B cell (primary cell): ENCODE measurements at regions of chr10 and their contacts with region 1.

Region 1: GRCh38 chr10:49407552-49408137 is 11.8 kb upstream of the DRGX start:
- DNase-seq: peak; percentile 62
- ATAC-seq: peak; percentile 33
- H3K4me3 ChIP-seq: no peak overlapping the region
- H3K4me3 Mint-ChIP-seq: no peak overlapping the region
- H3K27ac ChIP-seq: no peak overlapping the region
- H3K27ac Mint-ChIP-seq: no peak overlapping the region
- H3K4me1 ChIP-seq: no peaks in the 10 kb centered on the region
- H3K4me1 Mint-ChIP-seq: no peaks in the 10 kb centered on the region
- H3K27me3 ChIP-seq: peaks cover 0 to 10% (median 3%) of the 10 kb centered on the region in 4 experiments
- H3K27me3 Mint-ChIP-seq: peaks cover 52% of the 10 kb centered on the region
- CTCF ChIP-seq: peak; percentile 77

Region 2: GRCh38 chr10:49389361-49389933 is 18.2 kb before region 1 on chr10:
- CTCF ChIA-PET with region 1: interaction called, 11 read pairs
- POLR2A ChIA-PET with region 1: no interaction called
- intact Hi-C with region 1: no loop called
- DNase-seq: no peak
- ATAC-seq: no peak
- H3K4me3 ChIP-seq: no peak overlapping the region
- H3K4me3 Mint-ChIP-seq: no peak overlapping the region
- H3K27ac ChIP-seq: no peak overlapping the region
- H3K27ac Mint-ChIP-seq: no peak overlapping the region
- H3K4me1 ChIP-seq: no peaks in the 10 kb centered on the region
- H3K4me1 Mint-ChIP-seq: no peaks in the 10 kb centered on the region
- H3K27me3 ChIP-seq: peaks cover 0 to 32% (median 18%) of the 10 kb centered on the region in 4 experiments
- H3K27me3 Mint-ChIP-seq: peaks cover 51% of the 10 kb centered on the region
- CTCF ChIP-seq: no peak

Region 3: GRCh38 chr10:49471532-49471931 is 63.9 kb after region 1 on chr10:
- CTCF ChIA-PET with region 1: interaction called, 4 read pairs
- POLR2A ChIA-PET with region 1: no interaction called
- intact Hi-C with region 1: loop called (anchors 2 kb)
- DNase-seq: no peak
- ATAC-seq: no peak
- H3K4me3 ChIP-seq: no peak overlapping the region
- H3K4me3 Mint-ChIP-seq: no peak overlapping the region
- H3K27ac ChIP-seq: no peak overlapping the region
- H3K27ac Mint-ChIP-seq: no peak overlapping the region
- H3K4me1 ChIP-seq: no peaks in the 10 kb centered on the region
- H3K4me1 Mint-ChIP-seq: no peaks in the 10 kb centered on the region
- H3K27me3 ChIP-seq: no peaks in the 10 kb centered on the region
- H3K27me3 Mint-ChIP-seq: no peaks in the 10 kb centered on the region
- CTCF ChIP-seq: no peak

Region 4: DNA sequence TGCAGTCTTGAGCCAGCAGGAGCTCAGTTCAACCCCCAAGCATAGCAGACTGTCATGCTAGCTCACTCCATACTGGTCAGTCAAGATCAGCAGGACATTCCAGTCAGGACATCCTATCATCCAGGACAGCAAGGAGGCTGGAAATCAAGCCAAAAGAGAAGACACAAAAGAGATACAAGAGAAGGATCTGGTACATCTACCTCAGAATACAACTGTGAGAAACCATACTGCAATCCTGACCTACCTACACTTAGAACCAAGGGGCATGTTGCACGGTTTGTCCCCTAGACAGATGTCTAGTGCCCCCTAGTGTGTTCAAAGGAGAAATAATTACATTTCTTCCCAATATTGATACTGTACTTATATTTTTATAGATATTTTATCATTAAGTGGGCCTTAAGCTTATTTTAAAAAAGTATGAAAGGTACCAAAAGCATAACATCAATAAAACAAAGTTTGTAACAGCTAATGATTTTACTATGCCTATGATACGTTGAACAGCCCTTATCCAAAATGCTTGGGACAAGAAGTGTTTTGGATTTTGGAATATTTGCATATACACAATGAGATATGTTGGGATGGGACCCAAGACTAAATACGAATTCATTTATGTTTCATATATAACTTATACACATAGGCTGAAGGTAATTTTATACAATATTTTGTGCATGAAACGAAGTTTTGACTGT is 104.6 kb after region 1 on chr10:
- CTCF ChIA-PET with region 1: interaction called, 31 read pairs
- POLR2A ChIA-PET with region 1: no interaction called
- intact Hi-C with region 1: no loop called
- DNase-seq: peak; percentile 40
- ATAC-seq: no peak
- H3K4me3 ChIP-seq: no peak overlapping the region
- H3K4me3 Mint-ChIP-seq: no peak overlapping the region
- H3K27ac ChIP-seq: no peak overlapping the region
- H3K27ac Mint-ChIP-seq: no peak overlapping the region
- H3K4me1 ChIP-seq: peaks cover 11 to 13% of the 10 kb centered on the region in 2 donors
- H3K4me1 Mint-ChIP-seq: peaks cover 15% of the 10 kb centered on the region
- H3K27me3 ChIP-seq: no peaks in the 10 kb centered on the region
- H3K27me3 Mint-ChIP-seq: no peaks in the 10 kb centered on the region
- CTCF ChIP-seq: peak; percentile 78

Region 5: DNA sequence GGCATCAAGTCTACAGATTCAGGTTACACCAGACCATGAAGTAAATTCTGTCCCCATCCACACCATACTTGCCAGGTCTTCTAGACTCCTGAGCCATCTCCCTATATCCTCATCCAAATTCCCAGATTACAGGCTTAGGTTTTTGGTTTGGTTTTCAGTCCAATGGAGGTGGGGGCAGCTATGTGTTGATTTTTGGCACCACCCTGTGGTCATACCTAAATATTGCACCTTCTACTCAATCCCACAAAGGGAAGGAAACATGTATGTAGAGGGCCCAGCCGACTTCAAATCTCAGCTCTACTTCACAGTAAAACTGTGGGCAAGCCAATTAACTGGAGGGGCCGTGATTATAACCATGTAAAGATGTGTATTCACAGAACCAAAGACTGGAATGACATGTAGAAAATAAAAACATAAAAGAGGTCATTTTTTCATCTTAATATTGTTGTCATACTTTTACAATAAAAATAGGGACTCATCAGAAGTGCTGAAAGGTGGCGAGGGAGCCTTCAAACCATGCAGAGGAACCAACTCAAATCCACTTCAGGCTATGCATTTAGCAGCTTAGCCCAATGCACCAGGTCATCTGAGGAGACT is 111.4 kb after region 1 on chr10:
- CTCF ChIA-PET with region 1: interaction called, 19 read pairs
- POLR2A ChIA-PET with region 1: no interaction called
- intact Hi-C with region 1: loop called (anchors 1 kb)
- DNase-seq: peak; percentile 56
- ATAC-seq: peak; percentile 81
- H3K4me3 ChIP-seq: no peak overlapping the region
- H3K4me3 Mint-ChIP-seq: no peak overlapping the region
- H3K27ac ChIP-seq: no peak overlapping the region
- H3K27ac Mint-ChIP-seq: no peak overlapping the region
- H3K4me1 ChIP-seq: no peaks in the 10 kb centered on the region
- H3K4me1 Mint-ChIP-seq: peaks cover 8% of the 10 kb centered on the region
- H3K27me3 ChIP-seq: no peaks in the 10 kb centered on the region
- H3K27me3 Mint-ChIP-seq: no peaks in the 10 kb centered on the region
- CTCF ChIP-seq: peak; percentile 82

Region 6: GRCh38 chr10:49606981-49607535 is 199.4 kb after region 1 on chr10:
- CTCF ChIA-PET with region 1: no interaction called
- POLR2A ChIA-PET with region 1: no interaction called
- intact Hi-C with region 1: no loop called
- DNase-seq: peak; percentile 61
- ATAC-seq: peak; percentile 53
- H3K4me3 ChIP-seq: no peak overlapping the region
- H3K4me3 Mint-ChIP-seq: no peak overlapping the region
- H3K27ac ChIP-seq: no peak overlapping the region
- H3K27ac Mint-ChIP-seq: no peak overlapping the region
- H3K4me1 ChIP-seq: peaks cover 0 to 7% of the 10 kb centered on the region in 2 donors
- H3K4me1 Mint-ChIP-seq: peaks cover 6% of the 10 kb centered on the region
- H3K27me3 ChIP-seq: peaks cover 0 to 55% (median 26%) of the 10 kb centered on the region in 4 experiments
- H3K27me3 Mint-ChIP-seq: peaks cover 63% of the 10 kb centered on the region
- CTCF ChIP-seq: no peak